ENCODE measurements at regions of chr17 and their contacts with region 1.

Region 1: DNA sequence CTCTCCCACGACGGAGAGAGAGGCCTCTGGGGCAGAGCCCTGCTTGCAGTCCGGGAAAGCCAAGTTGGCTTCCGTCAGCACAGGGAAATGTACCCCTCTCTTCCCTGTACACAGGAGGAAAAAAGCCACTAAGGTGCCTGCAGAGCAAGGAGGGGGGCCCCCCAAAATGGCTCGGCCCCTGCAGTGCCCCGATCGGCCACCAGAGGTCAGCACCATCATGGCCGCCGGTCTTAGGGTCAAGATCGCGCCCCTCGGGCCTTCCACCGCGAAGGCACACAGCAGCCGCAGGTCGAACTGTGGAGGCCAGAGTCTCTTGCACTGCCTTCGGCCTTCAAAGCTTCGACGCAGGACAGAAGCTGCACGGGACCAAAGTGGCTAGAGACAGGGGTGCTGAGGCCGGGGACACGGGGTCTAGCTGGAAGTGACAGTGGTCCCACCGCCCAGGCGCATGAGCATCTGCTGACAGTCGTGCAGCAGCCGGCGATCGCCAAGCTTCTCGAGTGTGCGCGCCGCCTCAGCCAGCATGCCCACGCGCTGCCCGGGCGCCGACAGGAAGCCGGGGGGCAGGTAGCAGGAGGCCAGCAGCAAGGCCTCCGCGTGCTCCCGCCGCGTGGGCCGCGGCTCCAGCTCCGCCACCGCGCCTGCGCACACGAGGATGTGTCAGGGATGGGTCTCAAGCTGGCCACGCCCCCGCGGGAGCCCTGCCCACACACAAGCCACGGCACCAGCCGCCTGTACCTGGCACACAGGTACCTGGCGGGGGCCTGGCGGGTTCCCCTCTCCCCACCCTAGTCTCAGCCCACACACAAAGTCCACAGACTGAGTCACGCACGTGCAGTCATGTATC is 24.4 kb downstream of the SREBF1 start:
- DNase-seq: peak; percentile 52 to 87 (median 72)
- ATAC-seq: peak; percentile 74
- H3K4me3 ChIP-seq: no peak overlapping the region
- H3K4me3 Mint-ChIP-seq: no peak overlapping the region
- H3K27ac ChIP-seq: no peak overlapping the region
- H3K27ac Mint-ChIP-seq: no peak overlapping the region
- H3K4me1 ChIP-seq: peaks cover 14% of the 10 kb centered on the region
- H3K4me1 Mint-ChIP-seq: peaks cover 21% of the 10 kb centered on the region
- H3K27me3 ChIP-seq: no peaks in the 10 kb centered on the region
- H3K27me3 Mint-ChIP-seq: no peaks in the 10 kb centered on the region
- CTCF ChIP-seq: peak; percentile 98

Region 2: DNA sequence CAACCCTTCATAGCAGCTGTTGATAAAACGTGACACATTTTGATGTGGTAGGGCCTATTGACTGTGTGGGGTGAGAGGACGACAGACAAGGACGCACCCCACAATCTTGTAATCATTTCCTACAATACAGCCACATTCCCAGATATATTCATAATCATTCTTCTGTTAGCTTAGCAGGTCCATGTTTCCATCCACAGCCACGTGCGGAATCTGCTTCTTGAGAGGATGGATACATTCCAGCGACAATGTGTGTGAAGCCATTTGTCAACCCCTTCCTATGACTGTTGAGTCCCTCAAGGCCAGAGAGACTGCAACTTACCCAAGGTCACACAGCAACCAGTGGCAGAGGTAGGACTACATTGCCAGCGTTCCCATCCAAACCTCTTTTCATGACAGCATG is 522.7 kb before region 1 on chr17:
- CTCF ChIA-PET with region 1: no interaction called
- POLR2A ChIA-PET with region 1: no interaction called
- intact Hi-C with region 1: no loop called
- DNase-seq: no peak
- ATAC-seq: no peak
- H3K4me3 ChIP-seq: no peak overlapping the region
- H3K4me3 Mint-ChIP-seq: no peak overlapping the region
- H3K27ac ChIP-seq: no peak overlapping the region
- H3K27ac Mint-ChIP-seq: no peak overlapping the region
- H3K4me1 ChIP-seq: no peaks in the 10 kb centered on the region
- H3K4me1 Mint-ChIP-seq: no peaks in the 10 kb centered on the region
- H3K27me3 ChIP-seq: no peaks in the 10 kb centered on the region
- H3K27me3 Mint-ChIP-seq: no peaks in the 10 kb centered on the region
- CTCF ChIP-seq: no peak

Region 3: GRCh38 chr17:17729620-17730249 is 82.7 kb before region 1 on chr17:
- CTCF ChIA-PET with region 1: interaction called, 11 read pairs
- POLR2A ChIA-PET with region 1: no interaction called
- intact Hi-C with region 1: no loop called
- DNase-seq: peak; percentile 29 to 78 (median 67)
- ATAC-seq: peak; percentile 90
- H3K4me3 ChIP-seq: no peak overlapping the region
- H3K4me3 Mint-ChIP-seq: no peak overlapping the region
- H3K27ac ChIP-seq: no peak overlapping the region
- H3K27ac Mint-ChIP-seq: peak overlapping the region; percentile 58
- H3K4me1 ChIP-seq: peaks cover 33% of the 10 kb centered on the region
- H3K4me1 Mint-ChIP-seq: peaks cover 31% of the 10 kb centered on the region
- H3K27me3 ChIP-seq: no peaks in the 10 kb centered on the region
- H3K27me3 Mint-ChIP-seq: no peaks in the 10 kb centered on the region
- CTCF ChIP-seq: peak; percentile 59

Region 4: DNA sequence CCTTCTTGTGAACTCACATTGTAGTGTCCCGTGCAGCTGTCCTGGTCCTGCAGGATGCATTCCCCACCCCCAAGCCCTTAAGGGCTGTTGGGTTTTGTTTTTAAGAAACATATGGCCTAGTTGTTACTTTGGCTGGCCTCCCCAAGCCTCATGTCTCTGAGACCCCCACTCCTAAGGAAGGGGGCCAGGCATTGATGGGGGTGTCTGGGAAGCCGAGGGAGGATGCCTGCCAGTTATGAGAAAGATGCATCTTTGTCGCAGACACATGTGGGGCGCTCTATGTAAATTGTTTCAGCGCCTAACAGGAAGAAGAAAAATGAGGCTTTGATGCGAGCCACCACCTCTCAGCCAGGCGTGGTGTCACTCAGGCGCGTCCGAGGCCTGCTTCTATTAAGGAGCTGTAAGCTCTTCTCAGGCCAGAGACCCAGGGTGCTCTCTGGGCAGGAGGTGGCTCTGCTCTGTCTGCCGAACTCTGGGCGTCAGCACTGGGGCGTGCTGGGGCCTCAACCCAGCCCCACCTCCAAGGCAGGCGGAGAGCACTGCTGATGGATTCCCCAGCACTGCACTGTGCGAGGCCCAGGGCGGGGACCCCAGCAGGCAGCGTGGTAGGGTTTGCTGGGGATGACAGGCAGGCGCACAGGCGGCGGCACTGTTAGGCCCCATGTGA is 46.2 kb before region 1 on chr17:
- CTCF ChIA-PET with region 1: no interaction called
- POLR2A ChIA-PET with region 1: no interaction called
- intact Hi-C with region 1: no loop called
- DNase-seq: peak in 2 of 9 experiments; percentile 28 to 33
- ATAC-seq: peak; percentile 71
- H3K4me3 ChIP-seq: no peak overlapping the region
- H3K4me3 Mint-ChIP-seq: peak overlapping the region; percentile 22
- H3K27ac ChIP-seq: no peak overlapping the region
- H3K27ac Mint-ChIP-seq: peak overlapping the region; percentile 80
- H3K4me1 ChIP-seq: peaks cover 28% of the 10 kb centered on the region
- H3K4me1 Mint-ChIP-seq: peaks cover 38% of the 10 kb centered on the region
- H3K27me3 ChIP-seq: no peaks in the 10 kb centered on the region
- H3K27me3 Mint-ChIP-seq: no peaks in the 10 kb centered on the region
- CTCF ChIP-seq: no peak

Region 5: DNA sequence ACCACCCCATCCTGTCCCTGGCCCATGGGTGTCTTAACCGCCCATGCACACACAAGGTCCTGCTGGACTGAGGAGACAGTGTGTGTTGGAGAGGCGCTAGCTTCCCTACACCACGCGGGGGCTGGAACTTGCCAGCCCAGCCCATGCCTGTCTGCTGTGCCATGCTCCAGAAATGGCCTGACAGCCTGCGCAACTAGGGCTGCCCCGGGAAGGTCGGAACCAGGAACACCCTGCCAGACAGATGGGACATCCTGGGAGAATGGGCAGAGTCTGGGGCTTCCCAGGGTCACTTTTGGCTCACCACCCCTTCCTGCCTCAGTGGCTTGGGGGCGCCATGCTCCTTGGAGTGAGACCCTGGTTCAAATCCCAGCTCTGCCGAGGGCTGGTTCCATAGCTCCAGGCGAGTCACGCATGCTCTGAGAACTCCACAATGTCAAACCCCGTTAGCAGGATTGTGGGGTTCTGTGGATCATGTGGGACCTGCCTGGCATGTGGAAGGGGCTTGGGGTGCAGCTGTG is 11.9 kb before region 1 on chr17:
- CTCF ChIA-PET with region 1: interaction called, 34 read pairs
- POLR2A ChIA-PET with region 1: no interaction called
- intact Hi-C with region 1: no loop called
- DNase-seq: no peak
- ATAC-seq: no peak
- H3K4me3 ChIP-seq: no peak overlapping the region
- H3K4me3 Mint-ChIP-seq: no peak overlapping the region
- H3K27ac ChIP-seq: no peak overlapping the region
- H3K27ac Mint-ChIP-seq: no peak overlapping the region
- H3K4me1 ChIP-seq: no peaks in the 10 kb centered on the region
- H3K4me1 Mint-ChIP-seq: no peaks in the 10 kb centered on the region
- H3K27me3 ChIP-seq: no peaks in the 10 kb centered on the region
- H3K27me3 Mint-ChIP-seq: no peaks in the 10 kb centered on the region
- CTCF ChIP-seq: no peak

Region 6: DNA sequence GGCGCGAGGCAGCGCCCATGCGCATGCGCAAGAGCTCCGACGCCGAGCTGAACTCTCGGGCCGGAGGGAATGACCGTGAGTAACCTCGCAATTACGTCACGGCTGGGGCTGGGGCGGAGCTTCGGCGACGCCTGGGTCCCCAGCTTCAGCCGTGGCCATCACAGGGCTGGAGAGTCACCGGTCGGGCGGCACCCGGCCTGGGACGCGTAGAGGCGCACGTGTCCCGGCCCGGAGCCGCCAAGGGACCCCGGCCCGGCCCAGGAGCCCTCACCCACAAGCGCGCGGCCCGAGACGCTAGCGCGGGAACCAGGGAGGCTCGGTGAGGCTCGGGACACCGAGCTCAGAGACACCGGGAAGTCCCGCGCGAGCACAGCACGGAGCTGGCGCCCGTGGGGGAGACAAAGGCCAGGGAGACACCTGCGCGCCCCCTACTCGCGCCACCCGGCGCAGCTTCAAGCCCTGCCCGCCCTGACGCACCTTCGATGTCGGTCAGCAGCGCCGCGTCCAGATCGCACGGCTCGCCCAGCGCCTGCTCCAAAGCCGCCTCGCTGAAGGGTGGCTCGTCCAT is 23.9 kb after region 1 on chr17:
- CTCF ChIA-PET with region 1: interaction called, 13 read pairs
- POLR2A ChIA-PET with region 1: no interaction called
- intact Hi-C with region 1: loop called in 1 of 2 experiments (anchors 2 kb)
- DNase-seq: peak; percentile 94 to 99 (median 97)
- ATAC-seq: peak; percentile 72
- H3K4me3 ChIP-seq: peak overlapping the region; percentile 87 to 95
- H3K4me3 Mint-ChIP-seq: peak overlapping the region; percentile 88
- H3K27ac ChIP-seq: peak overlapping the region; percentile 99
- H3K27ac Mint-ChIP-seq: peak overlapping the region; percentile 97
- H3K4me1 ChIP-seq: peaks cover 82% of the 10 kb centered on the region
- H3K4me1 Mint-ChIP-seq: peaks cover 75% of the 10 kb centered on the region
- H3K27me3 ChIP-seq: no peaks in the 10 kb centered on the region
- H3K27me3 Mint-ChIP-seq: no peaks in the 10 kb centered on the region
- CTCF ChIP-seq: no peak

Region 7: DNA sequence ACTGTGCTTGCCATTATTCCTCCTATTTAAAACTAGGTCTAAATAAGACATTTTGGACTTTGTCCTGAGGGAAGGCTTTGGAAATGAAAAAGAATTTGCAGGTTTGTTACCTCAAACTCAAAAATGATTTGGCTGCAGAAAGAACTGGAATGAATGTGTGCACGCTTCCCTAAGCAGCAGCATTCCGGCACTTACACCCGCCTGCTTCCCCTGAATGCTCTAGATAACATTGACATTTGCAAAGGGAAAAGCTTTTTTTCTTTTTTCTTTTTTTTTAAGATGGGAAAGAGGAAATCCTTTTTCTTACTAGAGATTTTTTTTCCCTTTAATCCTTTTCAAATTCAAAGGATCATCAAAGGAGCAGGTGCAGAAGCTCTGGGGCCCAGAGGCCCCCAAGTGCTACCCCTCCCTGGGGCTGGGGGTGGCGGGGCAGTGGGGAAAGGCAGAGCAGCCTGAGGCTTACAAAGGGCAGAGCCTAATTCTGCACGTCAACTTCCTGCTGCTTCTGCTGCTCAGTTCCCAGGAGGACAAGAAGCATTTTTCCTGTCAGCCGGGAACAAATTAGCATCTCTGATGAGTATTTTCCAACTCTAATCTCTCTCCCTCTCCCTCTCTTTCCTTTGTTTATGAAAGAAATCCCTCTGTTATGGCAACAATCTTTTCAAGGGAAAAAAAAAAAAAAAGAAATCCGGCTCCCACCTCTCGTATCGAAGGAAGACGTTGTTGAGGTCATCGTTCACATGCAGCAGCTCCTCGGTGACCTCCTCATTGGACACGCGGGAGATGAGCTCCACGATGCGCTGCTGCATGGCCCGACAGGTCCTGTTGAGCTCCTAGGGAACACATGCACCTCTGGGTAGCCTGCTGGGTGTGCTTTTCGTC is 56.4 kb after region 1 on chr17:
- CTCF ChIA-PET with region 1: interaction called, 308 read pairs
- POLR2A ChIA-PET with region 1: no interaction called
- intact Hi-C with region 1: no loop called
- DNase-seq: no peak
- ATAC-seq: no peak
- H3K4me3 ChIP-seq: no peak overlapping the region
- H3K4me3 Mint-ChIP-seq: no peak overlapping the region
- H3K27ac ChIP-seq: no peak overlapping the region
- H3K27ac Mint-ChIP-seq: no peak overlapping the region
- H3K4me1 ChIP-seq: peaks cover 1% of the 10 kb centered on the region
- H3K4me1 Mint-ChIP-seq: no peaks in the 10 kb centered on the region
- H3K27me3 ChIP-seq: no peaks in the 10 kb centered on the region
- H3K27me3 Mint-ChIP-seq: no peaks in the 10 kb centered on the region
- CTCF ChIP-seq: no peak

Measured in CD8-positive, alpha-beta T cell (primary cell).